Right ventricle myocardium inferior (tissue), 1 donor: ENCODE measurements at regions of chr19 and their contacts with region 1.

Region 1: GRCh38 chr19:35013031-35013819 is 13.1 kb downstream of the GRAMD1A start:
- DNase-seq: peak; percentile 88
- ATAC-seq: peak; percentile 73

Region 2: DNA sequence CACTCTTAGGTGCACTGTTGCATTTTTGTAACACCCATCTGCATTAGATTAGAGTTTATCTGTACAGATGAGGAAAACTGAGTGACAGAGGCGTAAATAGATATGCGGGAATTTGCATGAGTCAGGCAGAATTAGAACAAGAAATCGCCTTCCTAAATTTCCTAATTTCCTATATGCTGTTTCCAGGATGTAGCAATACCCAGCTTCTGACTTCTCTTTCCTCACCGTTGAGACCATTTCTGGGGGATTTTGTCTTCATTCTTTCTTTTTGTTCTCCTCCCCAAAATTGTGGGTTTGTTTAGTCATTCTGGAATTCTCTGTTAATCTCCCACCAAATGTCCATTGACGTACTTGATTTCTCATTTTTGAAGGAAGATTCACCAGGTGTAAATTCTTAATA is 38.6 kb before region 1 on chr19:
- intact Hi-C with region 1: loop called (anchors 1 kb)
- DNase-seq: no peak
- ATAC-seq: no peak

Region 3: GRCh38 chr19:34985249-34986022 is 27.8 kb before region 1 on chr19:
- intact Hi-C with region 1: no loop called
- DNase-seq: peak; percentile 78
- ATAC-seq: peak; percentile 90